Naive thymus-derived CD4-positive, alpha-beta T cell (primary cell): ENCODE measurements at regions of chr19 and their contacts with region 1.

Region 1: DNA sequence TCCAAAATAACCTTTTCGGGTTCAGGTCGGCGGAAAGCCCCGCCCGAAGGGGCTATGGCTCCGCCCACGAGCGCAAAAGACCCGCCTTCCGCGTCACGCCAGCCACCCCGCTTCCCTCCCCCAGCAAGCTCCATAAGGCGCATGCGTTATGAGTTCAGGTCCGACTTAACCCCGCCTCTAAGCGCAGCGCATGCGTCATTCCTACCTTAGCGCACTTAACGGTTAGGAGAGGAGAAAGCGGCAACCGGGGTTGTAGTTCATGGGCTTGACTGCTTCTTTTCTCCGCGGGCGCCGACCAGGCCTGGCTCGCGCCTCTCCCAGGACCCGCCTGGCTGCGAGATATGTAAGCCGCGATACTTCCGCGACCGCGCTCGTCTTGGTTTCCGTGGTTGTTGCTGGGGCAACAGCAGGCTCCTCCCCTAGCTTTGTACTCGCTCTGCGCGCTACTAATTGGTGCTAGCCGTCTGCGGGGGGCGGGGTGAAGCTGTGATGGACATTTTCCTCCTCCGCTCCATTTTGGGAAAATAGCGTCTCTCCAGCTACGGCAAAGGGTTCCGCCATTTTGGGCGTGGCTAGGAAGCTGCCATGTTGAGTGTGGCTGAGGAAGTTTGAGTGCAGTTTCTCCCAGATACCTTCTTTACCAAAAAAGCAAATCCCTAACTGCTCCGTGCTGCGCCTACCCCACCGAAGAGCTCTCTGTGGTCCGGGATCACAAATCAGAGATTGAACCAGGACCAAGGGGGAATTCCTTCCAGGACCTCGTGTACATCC is at the start of gene B9D2:
- DNase-seq: peak; percentile 91 to 99 (median 98)
- ATAC-seq: peak; percentile 96
- H3K4me3 ChIP-seq: peak within 1 kb of the TSS; percentile 98
- H3K4me3 Mint-ChIP-seq: peak within 1 kb of the TSS; percentile 82 to 100 (median 98)
- H3K27ac ChIP-seq: peak within 1 kb of the TSS; percentile 99
- H3K27ac Mint-ChIP-seq: peak within 1 kb of the TSS; percentile 96 to 100 (median 99)
- H3K4me1 ChIP-seq: peaks cover 15 to 21% of the 10 kb centered on the region in 2 donors
- H3K4me1 Mint-ChIP-seq: peaks cover 14 to 51% (median 41%) of the 10 kb centered on the region in 7 donors
- H3K27me3 ChIP-seq: no peaks in the 10 kb centered on the region
- H3K27me3 Mint-ChIP-seq: no peaks in the 10 kb centered on the region
- total RNA-seq, gene B9D2: 11.6 to 38.9 (median 12.5) TPM

Region 2: GRCh38 chr19:40348125-40348913 is 1015.6 kb before region 1 on chr19 and contains the starts of genes C19orf47 and PLD3:
- CTCF ChIA-PET with region 1: no interaction called
- POLR2A ChIA-PET with region 1: no interaction called
- intact Hi-C with region 1: loop called in 1 of 2 experiments (anchors 5 kb)
- DNase-seq: peak; percentile 92 to 99 (median 97)
- ATAC-seq: peak; percentile 97
- H3K4me3 ChIP-seq: peak within 1 kb of the TSS; percentile 61
- H3K4me3 Mint-ChIP-seq: peak within 1 kb of the TSS; percentile 83 to 99 (median 96)
- H3K27ac ChIP-seq: peak within 1 kb of the TSS; percentile 86
- H3K27ac Mint-ChIP-seq: peak within 1 kb of the TSS; percentile 81 to 98 (median 93)
- H3K4me1 ChIP-seq: peaks cover 7 to 14% of the 10 kb centered on the region in 2 donors
- H3K4me1 Mint-ChIP-seq: peaks cover 20 to 51% (median 44%) of the 10 kb centered on the region in 7 donors
- H3K27me3 ChIP-seq: no peaks in the 10 kb centered on the region
- H3K27me3 Mint-ChIP-seq: peaks cover 0 to 2% (median 0%) of the 10 kb centered on the region in 5 donors
- total RNA-seq, gene C19orf47: 12.6 to 20.3 (median 15.8) TPM
- total RNA-seq, gene PLD3: 75.4 to 137 (median 114) TPM

Region 3: DNA sequence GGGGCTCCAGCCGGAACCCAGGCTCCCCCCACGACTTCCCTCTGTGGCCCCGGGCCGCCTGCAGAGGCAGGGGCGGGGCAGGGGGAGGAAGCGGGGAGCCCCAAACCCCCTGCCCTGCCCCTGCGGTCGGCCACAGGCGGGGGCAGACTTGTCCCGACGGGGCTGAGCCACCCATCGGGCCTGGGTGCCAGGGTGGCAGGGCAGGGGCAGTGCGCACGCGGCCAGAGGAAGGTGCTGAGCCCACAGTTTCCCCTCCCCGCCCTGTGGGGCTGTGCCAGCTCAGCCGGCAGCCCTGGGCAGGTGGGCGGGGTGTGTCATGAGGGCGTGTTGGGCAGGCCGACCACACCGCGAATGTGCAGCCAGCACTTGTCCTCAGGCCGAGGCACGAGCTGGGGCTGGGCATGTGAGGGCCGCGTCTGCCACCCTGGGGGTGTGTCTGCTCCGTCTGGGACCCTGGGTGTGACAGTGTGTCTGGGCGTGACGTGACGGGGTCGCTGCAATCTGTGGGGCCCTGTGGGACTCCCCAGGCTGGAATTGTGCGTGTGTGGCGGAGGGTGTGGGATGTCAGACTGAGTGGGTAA is 36.3 kb before region 1 on chr19:
- CTCF ChIA-PET with region 1: no interaction called
- POLR2A ChIA-PET with region 1: interaction called, 10 read pairs
- intact Hi-C with region 1: no loop called
- DNase-seq: peak; percentile 57 to 95 (median 66)
- ATAC-seq: peak; percentile 75
- H3K4me3 ChIP-seq: peak overlapping the region; percentile 42
- H3K4me3 Mint-ChIP-seq: peak overlapping the region; percentile 74 to 88 (median 82)
- H3K27ac ChIP-seq: peak overlapping the region; percentile 85
- H3K27ac Mint-ChIP-seq: peak overlapping the region; percentile 86 to 99 (median 94)
- H3K4me1 ChIP-seq: peaks cover 36 to 57% of the 10 kb centered on the region in 2 donors
- H3K4me1 Mint-ChIP-seq: peaks cover 59 to 77% (median 68%) of the 10 kb centered on the region in 7 donors
- H3K27me3 ChIP-seq: no peaks in the 10 kb centered on the region
- H3K27me3 Mint-ChIP-seq: no peaks in the 10 kb centered on the region

Region 4: GRCh38 chr19:41376241-41376997 is 12.5 kb after region 1 on chr19 and contains the start of gene TMEM91:
- CTCF ChIA-PET with region 1: interaction called, 3 read pairs
- POLR2A ChIA-PET with region 1: interaction called, 6 read pairs
- intact Hi-C with region 1: loop called in 1 of 2 experiments (anchors 1 kb)
- DNase-seq: peak in 1 of 9 donors; percentile 40
- ATAC-seq: peak; percentile 62
- H3K4me3 ChIP-seq: peak within 1 kb of the TSS; percentile 56
- H3K4me3 Mint-ChIP-seq: peak within 1 kb of the TSS; percentile 69 to 94 (median 86)
- H3K27ac ChIP-seq: peak within 1 kb of the TSS; percentile 74
- H3K27ac Mint-ChIP-seq: peak within 1 kb of the TSS; percentile 66 to 96 (median 86)
- H3K4me1 ChIP-seq: peaks cover 0 to 4% of the 10 kb centered on the region in 2 donors
- H3K4me1 Mint-ChIP-seq: peaks cover 12 to 26% (median 19%) of the 10 kb centered on the region in 7 donors
- H3K27me3 ChIP-seq: no peaks in the 10 kb centered on the region
- H3K27me3 Mint-ChIP-seq: no peaks in the 10 kb centered on the region
- total RNA-seq, gene TMEM91: 8.2 to 18.1 (median 16.0) TPM

Region 5: DNA sequence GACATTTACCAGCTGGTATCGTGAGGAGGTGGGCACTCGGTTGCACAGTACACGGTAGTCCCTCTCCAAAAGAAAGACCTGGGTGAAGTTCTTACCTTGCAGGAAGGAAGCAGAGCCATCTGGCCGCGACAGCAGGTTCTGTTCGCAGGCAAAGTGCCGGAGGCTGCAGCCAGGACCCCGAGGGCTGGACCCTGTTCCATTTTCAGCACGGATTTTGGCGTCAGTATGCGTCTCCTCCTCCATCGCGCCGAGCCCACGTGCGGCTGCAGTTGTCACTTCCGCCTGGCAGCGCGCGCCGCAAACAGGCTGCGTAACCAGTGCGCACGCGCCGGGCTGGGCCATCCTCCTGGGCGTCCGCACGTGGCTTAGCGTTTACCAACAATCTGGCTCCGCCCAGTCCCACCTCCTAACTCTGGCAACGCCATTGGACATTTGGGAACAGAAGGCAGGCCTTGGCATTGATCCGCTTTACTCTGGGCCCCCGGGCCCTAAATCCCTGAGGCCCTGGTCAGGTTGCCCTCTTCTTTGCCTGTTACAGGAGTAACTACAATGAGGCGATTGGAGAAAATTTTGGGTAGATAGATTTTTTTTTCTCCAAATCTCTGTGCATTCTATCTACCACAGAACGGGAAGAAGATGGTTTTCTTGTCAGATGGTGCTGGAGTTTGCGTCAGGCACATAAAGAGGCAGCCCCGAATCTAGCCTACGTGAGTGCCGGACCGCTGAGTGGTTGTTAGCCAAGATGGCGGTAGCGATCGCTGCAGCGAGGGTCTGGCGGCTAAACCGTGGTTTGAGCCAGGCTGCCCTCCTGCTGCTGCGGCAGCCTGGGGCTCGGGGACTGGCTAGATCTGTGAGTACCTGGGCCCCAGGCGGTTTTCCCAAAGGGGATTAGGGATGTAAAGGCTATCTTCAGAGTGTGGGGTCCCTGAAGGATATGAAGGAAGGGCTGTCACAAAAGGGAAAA is 33.4 kb after region 1 on chr19 and contains the starts of genes BCKDHA and EXOSC5:
- CTCF ChIA-PET with region 1: no interaction called
- POLR2A ChIA-PET with region 1: interaction called, 20 read pairs
- intact Hi-C with region 1: loop called (anchors 1 kb)
- DNase-seq: peak; percentile 96 to 100 (median 99)
- ATAC-seq: peak; percentile 99
- H3K4me3 ChIP-seq: peak within 1 kb of the TSS; percentile 96
- H3K4me3 Mint-ChIP-seq: peak within 1 kb of the TSS; percentile 95 to 99 (median 98)
- H3K27ac ChIP-seq: peak within 1 kb of the TSS; percentile 89
- H3K27ac Mint-ChIP-seq: peak within 1 kb of the TSS; percentile 99 to 100 (median 100)
- H3K4me1 ChIP-seq: peaks cover 19 to 23% of the 10 kb centered on the region in 2 donors
- H3K4me1 Mint-ChIP-seq: peaks cover 33 to 61% (median 50%) of the 10 kb centered on the region in 7 donors
- H3K27me3 ChIP-seq: no peaks in the 10 kb centered on the region
- H3K27me3 Mint-ChIP-seq: no peaks in the 10 kb centered on the region
- total RNA-seq, gene BCKDHA: 19.4 to 25.0 (median 20.5) TPM
- total RNA-seq, gene EXOSC5: 15.0 to 37.5 (median 20.6) TPM

Region 6: GRCh38 chr19:41439441-41440222 is 75.7 kb after region 1 on chr19 and contains the start of gene DMAC2:
- CTCF ChIA-PET with region 1: interaction called, 3 read pairs
- POLR2A ChIA-PET with region 1: interaction called, 5 read pairs
- intact Hi-C with region 1: loop called in 1 of 2 experiments (anchors 1 kb)
- DNase-seq: peak; percentile 65 to 94 (median 88)
- ATAC-seq: peak; percentile 100
- H3K4me3 ChIP-seq: peak within 1 kb of the TSS; percentile 96
- H3K4me3 Mint-ChIP-seq: peak within 1 kb of the TSS in 2 of 10 donors; percentile 49 to 54
- H3K27ac ChIP-seq: peak within 1 kb of the TSS; percentile 85
- H3K27ac Mint-ChIP-seq: peak within 1 kb of the TSS in 5 of 9 donors; percentile 3 to 89 (median 56)
- H3K4me1 ChIP-seq: peaks cover 7 to 12% of the 10 kb centered on the region in 2 donors
- H3K4me1 Mint-ChIP-seq: peaks cover 4 to 25% (median 6%) of the 10 kb centered on the region in 7 donors
- H3K27me3 ChIP-seq: no peaks in the 10 kb centered on the region
- H3K27me3 Mint-ChIP-seq: peaks cover 0 to 2% (median 0%) of the 10 kb centered on the region in 5 donors
- total RNA-seq, gene DMAC2: 22.2 to 44.4 (median 26.2) TPM

Region 7: GRCh38 chr19:41531438-41532311 is 167.7 kb after region 1 on chr19:
- CTCF ChIA-PET with region 1: no interaction called
- POLR2A ChIA-PET with region 1: interaction called, 14 read pairs
- intact Hi-C with region 1: no loop called
- DNase-seq: peak; percentile 59 to 95 (median 93)
- ATAC-seq: peak; percentile 95
- H3K4me3 ChIP-seq: peak overlapping the region; percentile 46
- H3K4me3 Mint-ChIP-seq: peak overlapping the region; percentile 77 to 98 (median 84)
- H3K27ac ChIP-seq: peak overlapping the region; percentile 75
- H3K27ac Mint-ChIP-seq: peak overlapping the region; percentile 83 to 98 (median 92)
- H3K4me1 ChIP-seq: peaks cover 32 to 46% of the 10 kb centered on the region in 2 donors
- H3K4me1 Mint-ChIP-seq: peaks cover 50 to 70% (median 64%) of the 10 kb centered on the region in 7 donors
- H3K27me3 ChIP-seq: no peaks in the 10 kb centered on the region
- H3K27me3 Mint-ChIP-seq: peaks cover 0 to 7% (median 0%) of the 10 kb centered on the region in 5 donors